Spleen (tissue), 13 donors: ENCODE measurements at regions of chr10 and their contacts with region 1.

Region 1: GRCh38 chr10:28375399-28376369 is 72.8 kb upstream of the MPP7 start:
- DNase-seq: no peak
- H3K4me3 ChIP-seq: no peak overlapping the region
- H3K27ac ChIP-seq: no peak overlapping the region
- H3K4me1 ChIP-seq: peaks cover 0 to 8% (median 0%) of the 10 kb centered on the region in 6 donors
- H3K27me3 ChIP-seq: no peaks in the 10 kb centered on the region
- CTCF ChIP-seq: no peak
- POLR2A ChIP-seq: no peak

Region 2: DNA sequence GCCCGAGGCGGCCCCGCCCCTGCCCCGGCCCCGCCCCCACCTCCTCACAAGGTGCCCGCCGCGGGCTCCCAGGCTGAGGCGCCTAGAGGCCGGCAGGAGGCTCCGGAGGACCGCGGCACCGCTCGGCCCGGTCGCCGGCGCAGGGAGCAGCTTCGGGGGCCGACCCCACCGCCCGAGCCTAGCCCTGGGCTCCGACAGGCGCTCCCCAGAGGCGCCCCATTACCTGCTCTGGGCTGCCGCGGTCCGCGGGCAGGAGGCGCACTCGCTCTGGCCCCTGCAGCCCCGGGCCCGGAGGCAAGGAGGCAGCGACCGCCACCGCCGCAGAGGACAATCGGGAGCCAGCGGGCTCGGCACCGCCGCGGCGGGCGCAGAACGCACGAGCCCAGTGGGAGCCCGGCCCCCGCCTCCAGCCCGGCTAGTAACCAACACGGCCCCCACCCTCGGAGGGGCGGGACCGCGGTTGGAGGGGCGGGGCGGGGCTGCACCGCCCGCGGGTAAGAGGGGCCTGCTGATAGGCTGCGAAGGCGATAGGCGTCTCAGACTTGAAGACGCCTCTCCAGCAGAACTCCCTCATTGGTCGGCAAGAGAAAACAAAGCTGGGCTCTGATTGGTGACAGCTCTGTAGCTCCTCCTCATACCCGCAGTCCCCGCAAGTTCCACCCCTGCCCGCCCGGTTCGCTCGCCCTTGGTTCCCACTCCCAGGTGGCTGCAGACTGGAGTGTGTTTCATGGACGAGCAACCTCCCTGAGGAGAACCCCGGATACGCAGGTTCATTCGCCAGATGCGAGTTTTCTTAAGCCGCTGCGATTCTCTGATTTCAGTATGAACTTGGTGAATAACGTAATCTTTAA is 72.8 kb before region 1 on chr10 and contains the start of gene MPP7:
- intact Hi-C with region 1: loop called (anchors 10 kb)
- DNase-seq: peak; percentile 99
- H3K4me3 ChIP-seq: peak within 1 kb of the TSS; percentile 65 to 91 (median 81)
- H3K27ac ChIP-seq: peak within 1 kb of the TSS; percentile 69 to 97 (median 90)
- H3K4me1 ChIP-seq: peaks cover 5 to 70% (median 19%) of the 10 kb centered on the region in 6 donors
- H3K27me3 ChIP-seq: peaks cover 0 to 31% (median 13%) of the 10 kb centered on the region in 7 donors
- CTCF ChIP-seq: peak in 8 of 11 experiments; percentile 6 to 62 (median 53)
- POLR2A ChIP-seq: peak in 1 of 3 donors; percentile 9
- total RNA-seq, gene MPP7: 5.1 to 11.5 (median 8.4) TPM

Region 3: GRCh38 chr10:28468707-28469483 is 93.2 kb after region 1 on chr10:
- intact Hi-C with region 1: no loop called
- DNase-seq: no peak
- H3K4me3 ChIP-seq: no peak overlapping the region
- H3K27ac ChIP-seq: no peak overlapping the region
- H3K4me1 ChIP-seq: peaks cover 0 to 12% (median 4%) of the 10 kb centered on the region in 6 donors
- H3K27me3 ChIP-seq: no peaks in the 10 kb centered on the region
- CTCF ChIP-seq: no peak
- POLR2A ChIP-seq: no peak

Region 4: DNA sequence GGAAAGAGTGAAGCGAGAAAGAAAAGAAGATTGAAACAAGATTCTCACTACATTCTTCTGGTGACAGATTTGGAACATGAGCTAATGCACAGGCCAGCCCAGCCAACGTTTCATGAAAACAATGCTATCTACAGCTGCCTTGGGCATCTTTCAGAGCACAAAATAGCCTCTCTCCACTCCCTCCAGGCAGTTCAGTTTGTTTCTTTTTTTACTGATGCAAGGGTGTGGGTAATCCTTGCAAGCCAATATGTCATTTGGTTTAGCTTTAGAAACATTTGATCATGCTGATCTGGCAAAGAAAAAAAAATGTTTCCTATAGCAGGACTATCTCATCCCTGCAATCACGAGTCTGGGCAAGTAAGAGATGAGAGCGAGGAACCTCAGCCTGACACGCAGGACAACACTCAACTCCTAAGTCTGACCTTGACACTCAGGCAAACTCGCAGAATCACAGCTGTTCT is 1223.2 kb after region 1 on chr10:
- intact Hi-C with region 1: no loop called
- DNase-seq: no peak
- H3K4me3 ChIP-seq: no peak overlapping the region
- H3K27ac ChIP-seq: no peak overlapping the region
- H3K4me1 ChIP-seq: peaks cover 0 to 10% (median 0%) of the 10 kb centered on the region in 6 donors
- H3K27me3 ChIP-seq: no peaks in the 10 kb centered on the region
- CTCF ChIP-seq: no peak
- POLR2A ChIP-seq: no peak